WTC11 (cell line): ENCODE measurements at regions of chr1 and their contacts with region 1.

Region 1: DNA sequence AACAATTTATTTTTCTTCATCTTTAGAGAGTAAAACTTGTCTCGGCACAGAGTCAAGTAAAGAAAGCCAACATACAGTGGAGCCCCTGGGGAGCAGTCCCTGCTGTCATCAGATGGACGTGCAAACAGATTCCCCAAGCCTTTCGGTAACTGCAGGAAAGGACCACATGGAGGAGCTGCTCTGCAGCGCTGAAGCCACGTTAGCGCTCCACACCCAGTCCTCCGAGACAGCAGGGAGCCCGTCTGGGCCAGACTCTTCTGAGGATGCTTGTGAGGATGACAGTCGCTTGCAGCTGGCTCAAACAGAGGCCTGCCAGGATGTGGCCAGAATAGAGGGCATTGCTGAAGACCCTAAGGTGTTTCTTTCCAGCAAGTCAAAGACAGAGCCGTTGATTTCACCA is 77.1 kb upstream of the SCCPDH start:
- DNase-seq: peak; percentile 79
- ATAC-seq: peak; percentile 99
- H3K4me3 Mint-ChIP-seq: no peak overlapping the region
- H3K27ac Mint-ChIP-seq: peak overlapping the region; percentile 18; the same call in 1 of the 2 replicates
- H3K4me1 Mint-ChIP-seq: peaks cover 21% of the 10 kb centered on the region
- H3K27me3 Mint-ChIP-seq: no peaks in the 10 kb centered on the region
- CTCF ChIP-seq: no peak

Region 2: GRCh38 chr1:246680696-246681130 is 33.6 kb after region 1 on chr1:
- CTCF ChIA-PET with region 1: no interaction called
- POLR2A ChIA-PET with region 1: no interaction called
- DNase-seq: no peak
- ATAC-seq: no peak
- H3K4me3 Mint-ChIP-seq: no peak overlapping the region
- H3K27ac Mint-ChIP-seq: no peak overlapping the region
- H3K4me1 Mint-ChIP-seq: no peaks in the 10 kb centered on the region
- H3K27me3 Mint-ChIP-seq: no peaks in the 10 kb centered on the region
- CTCF ChIP-seq: no peak

Region 3: GRCh38 chr1:246695136-246695535 is 48.0 kb after region 1 on chr1:
- CTCF ChIA-PET with region 1: interaction called, 12 read pairs
- POLR2A ChIA-PET with region 1: no interaction called
- DNase-seq: no peak
- ATAC-seq: no peak
- H3K4me3 Mint-ChIP-seq: no peak overlapping the region
- H3K27ac Mint-ChIP-seq: no peak overlapping the region
- H3K4me1 Mint-ChIP-seq: 0 out of 2 replicates have a peak, but pooled peaks cover 3% of the 10 kb centered on the region
- H3K27me3 Mint-ChIP-seq: peaks cover 19% of the 10 kb centered on the region
- CTCF ChIP-seq: no peak